Right ventricle myocardium inferior (tissue), 1 donor: ENCODE measurements at regions of chr17 and their contacts with region 1.

Region 1: DNA sequence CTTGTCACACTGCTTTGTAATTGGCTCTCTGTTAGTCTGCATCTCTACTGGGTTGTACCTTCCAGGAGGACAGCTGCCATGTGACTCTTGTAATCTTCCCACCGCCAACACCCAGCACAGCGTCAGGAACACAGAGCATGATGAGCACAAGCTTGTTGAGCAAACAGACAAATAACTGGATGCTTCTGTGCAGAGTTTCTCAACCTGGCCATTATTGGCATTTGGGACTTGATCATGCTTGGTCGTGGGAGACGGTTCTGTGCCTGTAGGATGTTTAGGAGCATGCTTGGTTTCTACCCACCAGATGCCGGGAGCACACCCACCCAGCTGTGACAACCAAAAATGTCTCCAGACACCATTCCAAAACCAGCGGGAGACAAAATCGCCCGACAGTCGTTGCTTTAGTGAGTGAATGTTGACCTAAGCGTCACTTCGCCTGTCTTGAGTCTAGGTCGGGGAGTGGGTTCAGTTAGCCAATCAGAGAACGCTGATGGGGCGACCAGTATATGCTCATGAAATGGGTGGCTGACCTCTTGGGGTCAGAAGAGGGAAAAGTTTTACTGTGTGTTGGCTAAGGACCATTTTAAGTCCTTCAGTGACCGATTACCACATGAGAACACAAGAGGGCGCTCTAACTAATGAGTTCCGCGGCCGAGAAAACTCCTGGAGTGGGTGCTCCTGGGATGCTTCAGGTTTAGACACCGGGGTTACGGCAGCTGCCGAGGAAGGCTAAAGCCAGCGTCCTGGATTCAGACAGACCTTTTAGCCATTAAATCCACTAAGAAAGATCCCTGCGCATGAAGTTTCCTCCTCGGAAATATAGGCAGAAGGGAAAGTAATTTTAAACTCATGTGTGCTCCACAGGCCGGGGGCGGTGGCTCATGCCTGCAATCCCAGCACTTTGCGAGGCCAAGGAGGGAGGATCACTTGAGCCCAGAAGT is 57.8 kb upstream of the TEX2 start:
- DNase-seq: peak; percentile 71
- ATAC-seq: peak; percentile 75

Region 2: GRCh38 chr17:64357191-64357981 is 36.5 kb after region 1 on chr17:
- intact Hi-C with region 1: loop called (anchors 5 kb)
- DNase-seq: peak; percentile 76
- ATAC-seq: peak; percentile 93